ENCODE measurements at regions of chr2 and their contacts with region 1.

Region 1: GRCh38 chr2:36373149-36373926 is 17.8 kb downstream of the CRIM1 start:
- DNase-seq: no peak

Region 2: DNA sequence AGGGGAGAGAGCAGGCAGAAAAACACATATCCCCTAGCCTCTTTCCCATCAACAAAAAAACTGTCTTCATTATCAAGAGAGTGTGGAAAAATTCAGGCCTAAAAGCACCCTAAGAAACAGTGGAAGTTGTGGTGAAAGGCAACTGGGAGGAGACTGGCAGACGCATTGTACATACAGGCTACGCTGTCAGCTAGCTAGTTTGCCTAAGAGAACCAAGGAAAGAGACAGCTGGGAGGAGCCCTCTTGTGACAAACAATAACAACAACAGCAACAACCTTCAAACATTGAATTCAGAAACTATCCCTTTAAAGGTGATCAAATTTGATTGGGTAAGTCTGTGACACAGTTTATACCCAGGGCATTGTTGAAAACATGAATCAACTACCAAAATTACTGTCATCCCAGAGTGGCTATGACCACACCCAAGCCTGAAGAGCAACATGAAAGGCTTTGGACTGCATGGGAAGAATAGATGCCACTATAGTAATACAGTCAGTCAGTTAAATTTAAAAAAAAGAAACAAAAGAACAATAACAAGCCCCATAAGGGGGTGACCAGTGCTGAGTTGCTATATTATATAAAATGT is 106.7 kb before region 1 on chr2:
- intact Hi-C with region 1: no loop called
- DNase-seq: no peak

Region 3: GRCh38 chr2:36408198-36408703 is 34.9 kb after region 1 on chr2:
- intact Hi-C with region 1: no loop called
- DNase-seq: no peak

Region 4: GRCh38 chr2:36459725-36460137 is 86.4 kb after region 1 on chr2:
- intact Hi-C with region 1: loop called (anchors 5 kb)
- DNase-seq: no peak

Measured in cardiac septum (tissue), 1 donor.